ENCODE measurements at regions of chr22 and their contacts with region 1.

Region 1: GRCh38 chr22:24525416-24526037 is 29.4 kb downstream of the GUCD1 start:
- DNase-seq: peak; percentile 92
- ATAC-seq: peak; percentile 96
- H3K4me3 Mint-ChIP-seq: no peak overlapping the region
- H3K27ac Mint-ChIP-seq: no peak overlapping the region
- H3K4me1 Mint-ChIP-seq: peaks cover 14% of the 10 kb centered on the region
- H3K27me3 Mint-ChIP-seq: peaks cover 4% of the 10 kb centered on the region

Region 2: GRCh38 chr22:24333301-24333700 is 192.2 kb before region 1 on chr22:
- CTCF ChIA-PET with region 1: interaction called, 10 read pairs
- DNase-seq: no peak
- ATAC-seq: no peak
- H3K4me3 Mint-ChIP-seq: no peak overlapping the region
- H3K27ac Mint-ChIP-seq: no peak overlapping the region
- H3K4me1 Mint-ChIP-seq: peaks cover 26% of the 10 kb centered on the region
- H3K27me3 Mint-ChIP-seq: no peaks in the 10 kb centered on the region

Region 3: GRCh38 chr22:24417901-24418641 is 107.5 kb before region 1 on chr22:
- CTCF ChIA-PET with region 1: interaction called, 102 read pairs
- DNase-seq: no peak
- ATAC-seq: no peak
- H3K4me3 Mint-ChIP-seq: no peak overlapping the region
- H3K27ac Mint-ChIP-seq: no peak overlapping the region
- H3K4me1 Mint-ChIP-seq: no peaks in the 10 kb centered on the region
- H3K27me3 Mint-ChIP-seq: peaks cover 8% of the 10 kb centered on the region

Measured in activated CD8-positive, alpha-beta memory T cell treated with anti-CD3 and anti-CD28 coated beads, Interleukin-2, amount 10 ng/mL, durations not matched to agents 7 days and 5 days (primary cell).